PC-3 (cell line): ENCODE measurements at regions of chr1 and their contacts with region 1.

Region 1: GRCh38 chr1:224170365-224171112 is 12.5 kb upstream of the DEGS1 start:
- DNase-seq: peak; percentile 61
- ATAC-seq: no peak
- H3K4me3 ChIP-seq: no peak overlapping the region
- H3K27ac ChIP-seq: no peak overlapping the region
- H3K4me1 ChIP-seq: peaks cover 22% of the 10 kb centered on the region
- H3K27me3 ChIP-seq: no peaks in the 10 kb centered on the region
- CTCF ChIP-seq: peak; percentile 65

Region 2: GRCh38 chr1:224080115-224080774 is 90.3 kb before region 1 on chr1:
- CTCF ChIA-PET with region 1: no interaction called
- POLR2A ChIA-PET with region 1: no interaction called
- intact Hi-C with region 1: no loop called
- DNase-seq: peak; percentile 97
- ATAC-seq: peak; percentile 85
- H3K4me3 ChIP-seq: no peak overlapping the region
- H3K27ac ChIP-seq: peak overlapping the region; percentile 83
- H3K4me1 ChIP-seq: peaks cover 32% of the 10 kb centered on the region
- H3K27me3 ChIP-seq: no peaks in the 10 kb centered on the region
- CTCF ChIP-seq: no peak

Region 3: DNA sequence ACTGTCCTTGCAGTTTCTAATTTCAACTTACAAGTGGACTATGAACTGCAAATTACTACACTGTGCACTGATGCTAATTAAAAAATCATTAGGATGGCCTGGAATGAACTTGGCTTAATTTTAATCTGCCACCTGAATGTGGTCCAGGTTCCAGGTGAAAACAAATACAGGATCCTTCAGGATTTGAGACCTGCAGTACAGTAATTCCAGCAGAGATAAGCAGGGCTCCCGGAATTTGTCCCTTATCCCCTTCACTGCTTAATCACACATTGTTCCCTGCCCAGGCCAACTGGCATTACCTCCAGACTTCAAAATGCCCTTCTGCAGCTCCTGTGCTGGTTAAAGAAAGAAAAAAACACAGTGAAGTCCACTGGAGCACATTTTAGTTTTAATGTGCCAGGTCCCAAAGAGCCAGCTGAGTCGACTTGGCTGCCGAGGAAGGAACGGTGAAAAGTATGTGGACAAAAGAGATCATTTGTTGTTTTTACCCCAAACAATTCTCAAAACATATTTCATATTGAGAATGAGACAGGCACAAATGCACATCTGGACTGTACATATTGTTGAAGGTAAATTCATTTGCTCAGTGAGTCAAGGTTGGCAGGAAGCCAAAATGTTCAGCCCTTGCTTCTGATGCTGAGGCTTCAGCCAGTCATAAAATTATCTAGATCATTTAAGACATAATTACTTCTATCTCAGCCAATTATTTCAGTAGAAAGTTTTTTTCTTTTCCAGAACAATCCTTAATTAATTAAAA is 40.8 kb after region 1 on chr1:
- CTCF ChIA-PET with region 1: no interaction called
- POLR2A ChIA-PET with region 1: no interaction called
- intact Hi-C with region 1: loop called (anchors 5 kb)
- DNase-seq: peak; percentile 94
- ATAC-seq: peak; percentile 89
- H3K4me3 ChIP-seq: no peak overlapping the region
- H3K27ac ChIP-seq: peak overlapping the region; percentile 4; the same call in 1 of the 2 replicates
- H3K4me1 ChIP-seq: peaks cover 26% of the 10 kb centered on the region
- H3K27me3 ChIP-seq: no peaks in the 10 kb centered on the region
- CTCF ChIP-seq: no peak